ENCODE measurements at regions of chr2 and their contacts with region 1.

Region 1: GRCh38 chr2:20507166-20507692 is 60.4 kb downstream of the RHOB start:
- DNase-seq: no peak
- H3K4me3 Mint-ChIP-seq: no peak overlapping the region
- H3K27ac Mint-ChIP-seq: no peak overlapping the region
- H3K4me1 Mint-ChIP-seq: peaks cover 35% of the 10 kb centered on the region
- H3K27me3 Mint-ChIP-seq: no peaks in the 10 kb centered on the region
- CTCF ChIP-seq: no peak

Region 2: DNA sequence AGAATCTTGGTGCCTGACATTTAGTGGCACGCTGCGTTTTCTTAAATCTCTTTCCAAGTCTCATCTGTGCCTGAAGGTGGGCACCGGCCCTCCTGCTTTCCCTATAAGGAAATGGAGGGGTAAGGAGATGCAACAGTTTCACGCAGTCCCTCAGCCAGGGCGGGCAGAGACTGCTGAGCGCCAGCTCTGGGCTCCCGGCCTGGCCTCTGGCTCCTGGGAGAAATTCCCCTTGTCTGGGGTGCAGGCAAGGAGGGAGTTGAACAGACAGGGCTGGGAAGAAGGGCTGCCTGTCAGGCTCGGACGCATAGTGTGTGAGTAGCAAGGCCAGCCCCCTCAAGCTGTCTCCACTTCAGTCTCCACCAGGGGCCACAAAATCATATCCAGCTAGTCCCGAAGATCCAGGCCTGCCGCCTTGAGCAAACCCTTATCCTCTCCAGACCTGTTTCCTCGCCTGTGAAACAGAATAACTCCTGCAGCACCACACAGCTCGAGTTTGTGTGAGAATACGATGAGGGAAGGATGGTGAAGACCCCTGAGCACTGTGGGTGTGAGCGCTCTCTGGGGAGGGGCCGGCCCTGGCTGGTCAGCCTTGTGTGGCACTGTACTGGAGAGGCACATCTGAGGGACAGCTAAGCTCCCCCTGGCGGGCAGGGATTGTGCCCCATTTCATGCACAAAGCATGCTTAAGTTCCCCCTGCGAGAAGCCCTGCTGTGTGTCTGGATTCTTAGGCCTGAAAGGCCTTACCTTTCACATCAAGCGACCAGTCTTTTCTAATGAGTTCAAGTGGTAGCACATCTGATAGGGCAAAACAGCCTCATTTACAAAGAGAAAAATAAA is 316.1 kb before region 1 on chr2:
- CTCF ChIA-PET with region 1: no interaction called
- POLR2A ChIA-PET with region 1: no interaction called
- intact Hi-C with region 1: no loop called
- DNase-seq: peak; percentile 61
- H3K4me3 Mint-ChIP-seq: no peak overlapping the region
- H3K27ac Mint-ChIP-seq: no peak overlapping the region
- H3K4me1 Mint-ChIP-seq: no peaks in the 10 kb centered on the region
- H3K27me3 Mint-ChIP-seq: no peaks in the 10 kb centered on the region
- CTCF ChIP-seq: peak; percentile 39

Region 3: GRCh38 chr2:20282916-20283592 is 224.2 kb before region 1 on chr2:
- CTCF ChIA-PET with region 1: no interaction called
- POLR2A ChIA-PET with region 1: no interaction called
- intact Hi-C with region 1: no loop called
- DNase-seq: no peak
- H3K4me3 Mint-ChIP-seq: no peak overlapping the region
- H3K27ac Mint-ChIP-seq: no peak overlapping the region
- H3K4me1 Mint-ChIP-seq: no peaks in the 10 kb centered on the region
- H3K27me3 Mint-ChIP-seq: no peaks in the 10 kb centered on the region
- CTCF ChIP-seq: no peak

Region 4: DNA sequence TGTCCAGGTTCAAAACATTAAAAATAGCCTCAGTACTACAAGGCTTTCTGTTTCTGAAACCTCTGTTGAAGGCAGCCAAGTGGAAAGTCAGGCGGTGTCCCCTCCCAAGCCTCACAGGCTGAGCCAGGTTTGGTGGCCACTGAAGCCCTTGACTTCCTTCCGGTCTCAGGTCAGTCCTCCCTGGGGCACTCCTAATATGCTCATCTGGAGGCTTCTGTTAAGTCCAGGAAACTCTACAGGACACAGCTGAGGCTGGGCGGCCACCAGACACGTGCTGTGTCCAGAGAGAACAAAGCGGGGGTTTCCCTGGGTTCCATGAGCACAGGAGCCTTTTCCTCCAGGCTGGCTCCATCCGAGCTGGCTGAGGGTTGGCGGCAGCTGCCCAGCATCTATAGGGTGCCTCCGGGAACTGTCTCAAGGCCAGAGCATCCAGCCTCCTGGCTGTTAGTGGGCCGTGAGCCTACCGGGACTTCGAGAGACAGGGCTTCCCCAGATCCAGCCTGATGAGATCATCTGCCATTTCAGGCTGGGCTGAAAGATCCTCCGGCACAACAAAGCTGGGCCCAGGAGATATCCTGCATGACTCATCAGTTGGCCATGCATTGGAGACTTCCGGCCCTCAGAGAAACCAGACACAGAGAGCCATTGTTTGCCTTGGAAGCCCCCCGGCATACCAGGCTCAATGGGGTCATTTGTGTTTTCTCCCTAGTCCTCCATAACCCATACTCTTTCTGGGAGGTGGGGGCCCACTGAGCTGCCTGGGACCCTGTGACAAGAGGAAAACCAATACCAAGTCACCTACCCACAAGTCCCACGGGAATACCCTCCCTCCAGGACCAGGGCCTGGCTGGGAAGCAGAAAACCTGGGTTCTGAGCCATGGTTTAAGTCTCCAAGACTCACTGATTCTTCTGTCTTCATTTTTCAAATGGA is 71.9 kb after region 1 on chr2:
- CTCF ChIA-PET with region 1: interaction called, 4 read pairs
- POLR2A ChIA-PET with region 1: interaction called, 4 read pairs
- intact Hi-C with region 1: loop called (anchors 10 kb)
- DNase-seq: peak; percentile 93
- H3K4me3 Mint-ChIP-seq: no peak overlapping the region
- H3K27ac Mint-ChIP-seq: peak overlapping the region; percentile 86
- H3K4me1 Mint-ChIP-seq: peaks cover 35% of the 10 kb centered on the region
- H3K27me3 Mint-ChIP-seq: no peaks in the 10 kb centered on the region
- CTCF ChIP-seq: no peak